ENCODE measurements at regions of chr3 and their contacts with region 1.

Region 1: DNA sequence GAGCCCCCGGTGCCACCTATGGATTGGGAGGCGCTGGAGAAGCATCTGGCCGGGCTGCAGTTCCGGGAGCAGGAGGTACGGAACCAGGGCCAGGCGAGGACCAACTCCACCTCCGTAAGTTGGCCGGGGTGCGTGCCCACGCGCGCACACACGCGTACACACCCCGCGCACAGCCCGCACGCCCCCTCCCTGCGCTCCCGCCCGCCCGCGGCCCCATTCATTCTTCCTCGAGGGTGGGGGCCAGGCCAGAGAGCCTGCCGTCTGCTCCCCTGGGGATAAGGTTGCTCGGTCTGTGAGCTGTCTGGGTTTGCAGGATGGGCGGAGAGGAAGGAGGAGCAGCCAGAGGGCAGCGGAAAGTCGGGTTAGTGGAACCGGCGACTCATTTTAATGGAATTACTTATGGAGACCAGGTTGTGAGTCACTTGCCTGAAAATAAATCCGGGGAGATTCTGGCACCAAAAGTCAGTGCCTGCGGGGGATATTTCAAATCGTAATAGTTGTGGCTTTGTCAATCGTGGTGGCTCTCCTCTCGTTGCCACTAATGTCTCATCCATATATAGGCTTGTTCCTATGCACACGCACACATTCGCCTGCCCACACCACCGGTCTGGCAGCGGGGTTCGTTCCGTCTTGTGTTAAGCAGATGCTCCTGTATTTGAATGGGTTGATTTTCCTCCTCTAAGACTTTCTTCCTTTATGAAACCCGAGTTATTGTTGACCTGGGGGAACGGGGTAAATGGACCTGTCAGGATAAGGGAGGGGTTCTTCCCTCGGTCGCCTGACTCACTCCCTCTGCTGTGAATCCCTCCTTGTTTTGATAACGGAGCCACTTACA is 223.4 kb upstream of the IL12A start:
- DNase-seq: peak; percentile 74
- H3K4me3 ChIP-seq: peak overlapping the region; percentile 83 to 96
- H3K27ac ChIP-seq: peak overlapping the region; percentile 88 to 97
- H3K4me1 ChIP-seq: peaks cover 22 to 40% of the 10 kb centered on the region in 2 experiments; a peak in 3 of 4 replicates
- H3K27me3 ChIP-seq: no peaks in the 10 kb centered on the region
- CTCF ChIP-seq: no peak
- EP300 ChIP-seq: peak in 1 of 2 experiments; percentile 60; a peak in 1 of 4 replicates
- RAD21 ChIP-seq: no peak

Region 2: DNA sequence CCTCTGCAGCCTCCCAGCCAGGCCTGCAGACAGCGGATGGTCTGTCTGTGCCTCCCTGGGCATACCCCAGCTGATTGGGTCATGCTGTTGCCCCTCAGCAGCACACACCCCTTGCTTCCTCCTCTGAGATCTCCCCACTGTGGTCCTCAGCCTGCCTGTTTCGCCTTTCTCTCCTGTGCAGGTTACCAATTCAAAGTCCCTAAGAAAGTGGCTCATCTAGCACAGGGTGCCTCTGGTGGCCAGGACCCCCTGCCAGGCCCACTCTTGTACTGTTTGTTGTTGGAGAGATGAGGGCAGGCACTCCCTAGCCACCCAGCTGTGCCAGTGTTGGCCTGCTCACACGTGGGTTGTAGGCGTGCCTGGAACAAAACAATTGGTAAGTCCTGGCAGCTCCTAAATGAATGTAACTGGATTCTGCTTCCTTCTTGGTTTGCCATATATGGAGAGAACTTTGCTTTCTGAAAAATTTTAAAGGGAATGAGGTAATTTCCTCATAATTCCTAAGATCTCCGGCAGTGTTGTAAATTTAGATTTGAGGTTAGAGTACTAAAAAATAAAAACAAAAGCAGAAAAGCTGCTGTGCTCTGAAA is 10.2 kb after region 1 on chr3:
- CTCF ChIA-PET with region 1: interaction called, 10 read pairs
- POLR2A ChIA-PET with region 1: no interaction called
- DNase-seq: peak; percentile 32
- H3K4me3 ChIP-seq: no peak overlapping the region
- H3K27ac ChIP-seq: peak overlapping the region in 1 of 2 experiments; percentile 71; a peak in 3 of 4 replicates
- H3K4me1 ChIP-seq: peaks cover 4 to 24% of the 10 kb centered on the region in 2 experiments; a peak in 3 of 4 replicates
- H3K27me3 ChIP-seq: no peaks in the 10 kb centered on the region
- CTCF ChIP-seq: no peak
- EP300 ChIP-seq: no peak
- RAD21 ChIP-seq: no peak

Region 3: GRCh38 chr3:159783777-159784743 is 18.8 kb after region 1 on chr3:
- CTCF ChIA-PET with region 1: interaction called, 11 read pairs
- POLR2A ChIA-PET with region 1: no interaction called
- DNase-seq: no peak
- H3K4me3 ChIP-seq: no peak overlapping the region
- H3K27ac ChIP-seq: no peak overlapping the region
- H3K4me1 ChIP-seq: peaks cover 8 to 35% of the 10 kb centered on the region in 2 experiments; a peak in 3 of 4 replicates
- H3K27me3 ChIP-seq: no peaks in the 10 kb centered on the region
- CTCF ChIP-seq: no peak
- EP300 ChIP-seq: no peak
- RAD21 ChIP-seq: no peak

Measured in SK-N-SH (cell line).